Panc1 (cell line): ENCODE measurements at regions of chr20 and their contacts with region 1.

Region 1: DNA sequence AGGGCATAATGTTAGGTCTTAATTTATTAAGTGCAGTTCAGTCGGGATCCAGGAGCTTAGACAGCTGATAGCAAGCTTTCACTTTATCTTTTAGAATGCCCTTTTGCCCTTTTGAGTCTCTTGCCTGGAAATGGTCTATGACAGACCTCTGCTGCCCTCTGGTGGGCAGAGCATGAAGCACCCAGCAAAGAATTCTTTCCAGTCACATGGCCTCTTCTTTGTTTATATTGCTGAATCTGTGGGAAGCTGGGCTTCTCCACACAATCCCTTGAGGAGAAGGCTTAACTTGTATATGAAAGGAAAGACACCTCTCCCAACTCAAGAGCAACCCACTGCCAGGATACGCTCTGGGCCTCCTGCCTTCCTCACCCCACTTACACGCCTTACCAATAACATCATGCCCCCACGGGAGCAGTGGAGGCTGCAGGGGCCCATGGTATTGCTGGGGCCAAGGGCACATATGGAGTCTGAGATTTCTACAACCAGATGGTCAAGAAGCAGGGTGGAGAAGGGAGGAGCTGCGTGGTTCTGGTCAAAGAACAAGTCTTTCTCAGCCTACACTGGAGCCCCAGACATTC is 20.4 kb downstream of the WFDC3 start:
- DNase-seq: peak; percentile 82
- ATAC-seq: peak; percentile 80
- H3K4me3 ChIP-seq: no peak overlapping the region
- H3K27ac ChIP-seq: no peak overlapping the region
- H3K4me1 ChIP-seq: no peaks in the 10 kb centered on the region
- H3K27me3 ChIP-seq: no peaks in the 10 kb centered on the region
- CTCF ChIP-seq: peak; percentile 92

Region 2: GRCh38 chr20:45322952-45323383 is 448.3 kb before region 1 on chr20:
- CTCF ChIA-PET with region 1: interaction called, 4 read pairs
- POLR2A ChIA-PET with region 1: no interaction called
- in situ Hi-C with region 1: no loop called
- intact Hi-C with region 1: loop called (anchors 10 kb)
- DNase-seq: no peak
- ATAC-seq: peak; percentile 61
- H3K4me3 ChIP-seq: no peak overlapping the region
- H3K27ac ChIP-seq: no peak overlapping the region
- H3K4me1 ChIP-seq: peaks cover 10% of the 10 kb centered on the region
- H3K27me3 ChIP-seq: no peaks in the 10 kb centered on the region
- CTCF ChIP-seq: peak; percentile 74

Region 3: DNA sequence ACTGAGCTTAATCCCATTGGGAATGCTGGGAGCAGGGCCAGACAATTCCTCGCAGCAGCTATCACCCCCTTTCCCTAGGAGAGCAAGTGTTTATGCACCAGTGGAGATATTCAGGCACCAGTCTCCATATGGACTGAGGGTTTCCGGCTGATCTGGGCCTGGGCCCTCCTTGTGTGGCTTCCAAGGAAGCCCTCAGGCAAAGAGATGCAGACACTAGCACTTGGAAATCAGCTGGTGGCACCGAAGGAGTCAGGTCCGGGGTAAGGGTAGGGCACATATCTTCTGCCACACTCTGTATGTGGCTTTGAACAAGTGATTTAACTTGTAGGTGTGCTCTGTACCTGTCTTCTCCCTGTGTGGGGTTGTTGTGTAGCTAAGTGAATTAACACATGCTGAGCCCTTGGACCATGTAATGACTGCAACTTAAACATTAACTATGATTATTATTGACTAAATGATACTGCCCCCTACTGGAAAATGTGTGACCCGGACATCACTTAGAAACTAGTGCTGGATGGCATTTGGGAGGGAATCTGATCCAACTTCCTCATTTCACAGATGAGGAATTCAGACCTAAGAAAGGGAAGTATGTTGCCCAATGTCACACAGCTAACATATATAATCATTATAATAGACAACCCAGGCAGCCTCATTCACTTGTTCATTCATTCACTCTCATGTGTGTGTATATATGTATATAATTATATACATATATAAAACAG is 321.0 kb before region 1 on chr20:
- CTCF ChIA-PET with region 1: no interaction called
- POLR2A ChIA-PET with region 1: no interaction called
- in situ Hi-C with region 1: no loop called
- intact Hi-C with region 1: loop called (anchors 10 kb)
- DNase-seq: peak; percentile 32
- ATAC-seq: peak; percentile 45; the same call in 1 of the 2 replicates
- H3K4me3 ChIP-seq: no peak overlapping the region
- H3K27ac ChIP-seq: no peak overlapping the region
- H3K4me1 ChIP-seq: no peaks in the 10 kb centered on the region
- H3K27me3 ChIP-seq: peaks cover 8% of the 10 kb centered on the region; the same call in 1 of the 2 replicates
- CTCF ChIP-seq: peak; percentile 77

Region 4: DNA sequence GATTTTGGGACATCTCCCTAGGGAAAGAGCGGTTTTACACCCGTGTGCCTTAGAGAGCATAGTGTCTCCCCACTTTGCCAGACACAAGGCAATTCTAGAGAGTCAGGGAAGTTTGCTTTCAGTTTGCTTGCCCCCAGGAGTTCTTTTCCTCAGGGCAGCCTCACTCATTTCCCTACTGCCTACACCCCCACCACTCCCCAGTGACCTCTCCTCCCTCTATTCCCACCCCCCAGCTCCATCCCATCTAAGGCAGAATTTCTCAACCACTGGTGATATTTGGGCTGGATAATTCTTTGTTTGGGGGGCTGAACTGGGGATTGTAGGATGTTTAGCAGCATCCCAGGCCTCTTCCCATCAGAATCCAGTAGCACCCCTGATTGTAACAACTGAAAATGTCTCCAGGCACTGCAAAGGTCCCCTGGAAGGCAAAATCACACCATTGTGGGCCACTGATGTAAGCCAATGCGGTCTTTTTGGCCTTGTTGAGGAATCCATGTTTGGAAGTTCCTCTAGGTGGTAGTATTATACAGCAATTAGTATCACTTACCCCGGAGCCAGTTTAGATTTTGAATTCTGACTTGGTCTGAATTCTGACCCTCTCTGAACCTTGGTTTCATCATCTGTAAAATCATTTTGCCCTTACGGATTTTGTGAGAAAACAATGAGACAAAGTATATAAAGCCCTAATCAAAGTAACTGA is 225.4 kb before region 1 on chr20:
- CTCF ChIA-PET with region 1: interaction called, 3 read pairs
- POLR2A ChIA-PET with region 1: interaction called, 5 read pairs
- in situ Hi-C with region 1: no loop called
- intact Hi-C with region 1: loop called (anchors 1 kb)
- DNase-seq: no peak
- ATAC-seq: peak; percentile 88
- H3K4me3 ChIP-seq: no peak overlapping the region
- H3K27ac ChIP-seq: no peak overlapping the region
- H3K4me1 ChIP-seq: no peaks in the 10 kb centered on the region
- H3K27me3 ChIP-seq: peaks cover 11% of the 10 kb centered on the region; the same call in 1 of the 2 replicates
- CTCF ChIP-seq: peak; percentile 56

Region 5: DNA sequence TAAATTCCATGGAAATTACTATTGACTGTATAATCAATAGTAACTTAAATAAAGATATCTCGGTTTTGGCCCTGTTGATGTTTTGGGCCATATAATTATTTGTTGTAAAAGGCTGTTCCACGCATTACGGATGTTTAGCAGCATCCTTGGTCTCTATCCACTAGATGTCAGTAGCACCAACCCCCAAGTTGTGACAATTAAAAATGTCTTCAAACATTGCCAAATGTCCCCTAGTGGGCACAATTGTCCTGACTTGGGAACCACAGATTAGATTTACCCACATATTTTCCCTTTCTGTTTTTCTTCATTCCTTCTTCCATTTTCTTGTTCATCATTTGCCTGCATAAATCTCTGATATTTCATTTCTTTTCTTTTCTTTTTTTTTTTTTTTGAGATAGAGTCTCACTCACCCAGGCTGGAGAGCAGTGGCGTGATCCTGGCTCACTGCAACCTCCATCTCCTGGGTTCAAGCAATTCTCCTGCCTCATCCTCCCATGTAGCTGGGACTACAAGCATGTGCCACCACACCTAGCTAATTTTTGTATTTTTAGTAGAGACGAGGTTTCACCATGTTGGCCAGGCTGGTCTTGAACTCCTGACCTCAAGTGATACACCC is 178.6 kb before region 1 on chr20:
- CTCF ChIA-PET with region 1: no interaction called
- POLR2A ChIA-PET with region 1: no interaction called
- in situ Hi-C with region 1: no loop called
- intact Hi-C with region 1: loop called (anchors 2 kb)
- DNase-seq: peak; percentile 47
- ATAC-seq: peak; percentile 83; the same call in 1 of the 2 replicates
- H3K4me3 ChIP-seq: no peak overlapping the region
- H3K27ac ChIP-seq: no peak overlapping the region
- H3K4me1 ChIP-seq: no peaks in the 10 kb centered on the region
- H3K27me3 ChIP-seq: no peaks in the 10 kb centered on the region
- CTCF ChIP-seq: peak; percentile 85

Region 6: DNA sequence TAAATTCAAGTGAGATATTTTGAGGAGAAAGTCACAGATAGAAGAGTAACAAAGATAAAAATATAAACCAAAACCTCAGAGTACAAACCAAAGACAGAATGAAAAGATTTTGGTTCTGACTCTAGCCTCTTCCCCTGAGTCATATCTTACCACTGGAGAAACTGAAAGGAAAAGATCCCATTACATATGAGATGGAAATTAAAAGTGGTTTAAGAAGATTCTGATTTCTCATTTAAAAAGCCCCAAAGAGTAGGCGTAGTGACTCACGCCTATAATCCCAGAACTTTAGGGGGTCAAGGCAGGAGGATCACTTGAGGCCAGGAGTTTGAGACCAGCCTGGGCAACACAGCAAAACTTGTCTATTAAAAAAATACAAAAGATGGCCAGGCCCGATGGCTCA is 18.5 kb before region 1 on chr20:
- CTCF ChIA-PET with region 1: no interaction called
- POLR2A ChIA-PET with region 1: no interaction called
- in situ Hi-C with region 1: no loop called
- intact Hi-C with region 1: no loop called
- DNase-seq: no peak
- ATAC-seq: no peak
- H3K4me3 ChIP-seq: no peak overlapping the region
- H3K27ac ChIP-seq: no peak overlapping the region
- H3K4me1 ChIP-seq: no peaks in the 10 kb centered on the region
- H3K27me3 ChIP-seq: peaks cover 2% of the 10 kb centered on the region; the same call in 1 of the 2 replicates
- CTCF ChIP-seq: no peak

Region 7: GRCh38 chr20:45798935-45799642 is 27.8 kb after region 1 on chr20:
- CTCF ChIA-PET with region 1: interaction called, 10 read pairs
- POLR2A ChIA-PET with region 1: no interaction called
- in situ Hi-C with region 1: no loop called
- intact Hi-C with region 1: no loop called
- DNase-seq: no peak
- ATAC-seq: peak; percentile 96
- H3K4me3 ChIP-seq: no peak overlapping the region
- H3K27ac ChIP-seq: no peak overlapping the region
- H3K4me1 ChIP-seq: no peaks in the 10 kb centered on the region
- H3K27me3 ChIP-seq: no peaks in the 10 kb centered on the region
- CTCF ChIP-seq: peak; percentile 84